Activated CD8-positive, alpha-beta memory T cell treated with anti-CD3 and anti-CD28 coated beads, Interleukin-2, amount 10 ng/mL, durations not matched to agents 7 days and 5 days (primary cell): ENCODE measurements at regions of chr1 and their contacts with region 1.

Region 1: DNA sequence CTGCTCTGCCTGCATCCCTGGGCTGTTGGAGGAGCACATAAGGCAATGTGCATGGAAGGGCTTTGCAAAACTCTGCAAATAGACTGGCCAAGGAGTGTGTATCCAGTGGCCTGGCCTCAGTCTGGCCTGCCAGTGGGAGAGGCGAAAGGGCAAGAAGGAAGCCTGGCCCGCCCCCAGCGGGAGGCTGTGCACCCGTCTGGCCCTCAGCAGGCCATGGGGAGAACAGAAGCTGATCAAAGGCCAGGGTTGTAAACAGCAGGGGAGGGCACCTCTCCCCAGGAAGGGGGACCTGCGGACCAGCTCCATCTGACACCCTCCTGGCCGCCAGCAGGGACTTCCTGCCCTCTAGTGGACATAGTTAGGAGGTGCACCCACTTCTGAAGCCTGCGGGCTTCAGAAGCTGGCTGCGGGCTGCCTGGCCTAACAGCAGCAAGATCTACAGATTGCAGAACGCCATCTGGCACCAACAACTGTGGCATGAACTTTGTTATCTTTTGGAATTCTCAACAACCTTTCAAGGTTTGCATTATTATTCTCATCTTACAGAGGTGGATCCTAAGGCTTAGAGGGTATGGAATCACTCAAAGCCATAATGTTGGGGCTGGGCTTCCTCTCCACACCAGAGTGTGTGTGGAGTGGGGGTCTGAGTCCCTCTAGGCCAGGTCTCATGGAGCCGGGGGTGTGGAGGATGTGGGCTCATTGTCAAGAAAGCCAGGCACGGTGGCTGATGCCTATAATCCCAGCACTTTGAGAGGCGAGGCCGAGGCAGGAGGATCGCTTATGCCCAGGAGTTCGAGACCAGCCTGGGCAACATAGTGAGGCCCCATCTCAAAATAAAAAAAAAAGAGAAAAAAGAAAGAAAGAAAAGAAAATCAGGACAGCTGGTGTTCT is 18.9 kb upstream of the CDK18 start:
- DNase-seq: peak; percentile 79
- ATAC-seq: peak; percentile 59
- H3K4me3 Mint-ChIP-seq: no peak overlapping the region
- H3K27ac Mint-ChIP-seq: no peak overlapping the region
- H3K4me1 Mint-ChIP-seq: peaks cover 36% of the 10 kb centered on the region
- H3K27me3 Mint-ChIP-seq: peaks cover 24% of the 10 kb centered on the region

Region 2: GRCh38 chr1:205335643-205336091 is 149.9 kb before region 1 on chr1:
- CTCF ChIA-PET with region 1: interaction called, 56 read pairs
- DNase-seq: peak; percentile 84
- ATAC-seq: peak; percentile 82
- H3K4me3 Mint-ChIP-seq: no peak overlapping the region
- H3K27ac Mint-ChIP-seq: no peak overlapping the region
- H3K4me1 Mint-ChIP-seq: peaks cover 18% of the 10 kb centered on the region
- H3K27me3 Mint-ChIP-seq: peaks cover 46% of the 10 kb centered on the region

Region 3: GRCh38 chr1:205391386-205391785 is 94.2 kb before region 1 on chr1:
- CTCF ChIA-PET with region 1: interaction called, 138 read pairs
- DNase-seq: no peak
- ATAC-seq: no peak
- H3K4me3 Mint-ChIP-seq: no peak overlapping the region
- H3K27ac Mint-ChIP-seq: no peak overlapping the region
- H3K4me1 Mint-ChIP-seq: no peaks in the 10 kb centered on the region
- H3K27me3 Mint-ChIP-seq: peaks cover 43% of the 10 kb centered on the region

Region 4: DNA sequence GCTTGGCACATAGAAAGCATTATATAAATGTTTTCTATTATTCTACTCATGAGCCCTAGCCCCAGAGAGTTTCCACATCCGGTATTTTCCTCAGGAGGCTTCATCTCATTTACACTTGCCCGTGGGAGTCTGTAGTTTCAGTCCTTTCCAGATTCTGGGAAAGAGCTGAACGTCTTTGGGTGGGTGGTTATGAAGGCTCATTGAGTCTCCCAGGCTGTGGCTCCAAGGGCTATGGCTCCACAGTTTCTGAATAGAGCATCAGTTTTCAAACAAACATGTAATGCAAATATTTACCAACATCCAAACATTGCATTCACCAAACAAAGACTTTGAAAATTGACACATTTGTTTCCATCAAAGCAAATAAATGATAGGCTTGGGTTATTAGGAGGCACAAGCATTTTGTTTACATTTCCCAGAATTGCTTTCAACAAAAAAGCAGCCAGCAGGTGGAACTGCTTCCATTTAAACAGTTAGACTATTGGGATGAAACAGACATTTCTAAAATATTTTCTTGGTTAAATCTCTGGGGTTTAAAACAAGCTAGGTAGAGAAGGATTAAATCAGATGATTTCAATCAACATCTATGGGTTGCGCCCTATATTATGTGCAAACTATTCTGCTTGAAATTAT is 62.5 kb before region 1 on chr1:
- CTCF ChIA-PET with region 1: interaction called, 21 read pairs
- DNase-seq: no peak
- ATAC-seq: no peak
- H3K4me3 Mint-ChIP-seq: no peak overlapping the region
- H3K27ac Mint-ChIP-seq: no peak overlapping the region
- H3K4me1 Mint-ChIP-seq: no peaks in the 10 kb centered on the region
- H3K27me3 Mint-ChIP-seq: peaks cover 60% of the 10 kb centered on the region

Region 5: GRCh38 chr1:205458777-205459566 is 26.6 kb before region 1 on chr1:
- CTCF ChIA-PET with region 1: interaction called, 25 read pairs
- DNase-seq: peak; percentile 64
- ATAC-seq: peak; percentile 58
- H3K4me3 Mint-ChIP-seq: no peak overlapping the region
- H3K27ac Mint-ChIP-seq: no peak overlapping the region
- H3K4me1 Mint-ChIP-seq: peaks cover 13% of the 10 kb centered on the region
- H3K27me3 Mint-ChIP-seq: peaks cover 60% of the 10 kb centered on the region

Region 6: GRCh38 chr1:205512059-205513045 is 26.8 kb after region 1 on chr1:
- CTCF ChIA-PET with region 1: interaction called, 11 read pairs
- DNase-seq: no peak
- ATAC-seq: no peak
- H3K4me3 Mint-ChIP-seq: no peak overlapping the region
- H3K27ac Mint-ChIP-seq: no peak overlapping the region
- H3K4me1 Mint-ChIP-seq: peaks cover 5% of the 10 kb centered on the region
- H3K27me3 Mint-ChIP-seq: no peaks in the 10 kb centered on the region